H1 (cell line): ENCODE measurements at regions of chr2 and their contacts with region 1.

Region 1: DNA sequence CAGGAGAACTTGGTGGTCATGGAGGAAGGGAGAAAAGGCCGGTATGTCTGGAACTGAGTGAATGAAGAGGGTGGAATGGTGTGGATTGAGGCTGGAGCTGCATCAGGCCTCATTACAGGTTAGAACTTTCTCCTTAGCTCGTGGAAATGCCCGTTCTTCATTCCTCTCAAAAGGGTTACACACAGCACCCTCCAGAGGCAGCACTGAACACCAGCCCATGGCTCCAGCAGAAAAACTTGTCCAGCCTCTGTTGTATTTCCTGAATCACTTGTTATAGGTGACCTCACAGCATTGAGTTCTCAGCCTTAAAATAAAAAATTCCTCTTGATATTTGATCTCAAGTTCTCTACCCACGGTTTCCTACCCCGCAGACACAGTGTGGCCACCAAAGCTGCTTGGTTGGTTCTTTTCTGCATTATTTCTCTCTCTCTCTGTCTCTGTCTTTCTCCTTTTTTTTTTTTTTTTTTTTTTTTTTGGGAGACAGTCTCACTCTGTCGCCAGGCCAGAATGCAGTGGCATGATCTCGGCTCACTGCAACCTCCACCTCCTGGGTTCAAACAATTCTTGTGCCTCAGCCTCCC is 89.6 kb downstream of the ITGB1BP1 start:
- DNase-seq: peak in 1 of 2 experiments; percentile 21
- H3K4me3 ChIP-seq: no peak overlapping the region
- H3K27ac ChIP-seq: no peak overlapping the region
- H3K4me1 ChIP-seq: no peaks in the 10 kb centered on the region; a peak in 1 of 7 replicates
- H3K27me3 ChIP-seq: no peaks in the 10 kb centered on the region
- CTCF ChIP-seq: peak; percentile 65 to 74 (median 66)
- EP300 ChIP-seq: no peak
- POLR2A ChIP-seq: no peak
- RAD21 ChIP-seq: peak; percentile 79 to 83

Region 2: DNA sequence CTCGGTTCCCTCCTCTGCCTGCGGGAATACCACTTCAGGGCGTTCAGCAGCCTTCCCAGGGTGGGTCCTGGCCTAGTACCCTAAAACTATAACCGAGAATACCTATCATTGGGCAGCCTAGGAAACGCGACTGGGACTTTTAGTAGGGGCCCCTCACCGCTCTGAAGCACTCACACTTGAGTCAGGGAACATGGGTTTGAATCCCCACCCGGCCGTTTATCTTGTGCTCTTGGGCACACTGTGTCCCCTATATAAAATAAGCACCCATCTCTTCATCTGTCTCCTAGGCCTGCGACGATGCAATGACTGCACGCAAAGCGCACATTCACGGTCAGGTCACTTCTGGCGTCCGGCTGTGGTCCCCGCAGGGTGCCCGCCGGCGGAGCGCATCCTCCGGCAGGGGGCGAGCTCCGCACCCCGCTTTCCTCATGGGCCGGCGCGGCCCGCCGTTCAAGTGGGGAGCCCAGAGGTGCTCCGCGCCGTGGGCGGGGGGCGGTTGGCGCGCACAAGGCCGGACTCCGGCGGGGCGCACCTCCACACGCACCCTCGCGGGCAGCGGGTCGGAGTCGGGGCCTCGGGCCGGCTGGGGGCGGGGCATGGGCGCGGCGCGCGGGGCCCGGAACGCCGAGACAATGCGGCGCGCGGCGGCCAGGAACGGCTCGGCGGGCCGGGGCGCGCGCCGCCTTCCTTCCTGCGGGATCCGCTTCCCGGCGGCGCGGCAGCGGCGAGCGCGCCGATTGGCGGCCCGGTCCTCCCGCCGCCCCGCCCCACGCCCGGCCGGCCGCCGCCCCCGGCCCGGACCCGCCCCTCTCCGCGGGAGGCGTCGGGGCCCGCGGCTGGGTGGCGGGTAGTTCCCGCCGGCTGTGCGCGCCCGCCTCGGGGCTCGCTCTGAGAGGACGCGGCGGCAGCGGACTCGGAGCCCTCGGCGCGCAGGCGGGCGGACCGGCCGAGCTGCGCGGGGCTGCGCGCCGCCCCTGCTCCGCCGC is 127.4 kb before region 1 on chr2 and contains the start of gene ASAP2:
- CTCF ChIA-PET with region 1: interaction called, 13 read pairs
- POLR2A ChIA-PET with region 1: interaction called, 3 read pairs
- DNase-seq: peak in 1 of 2 experiments; percentile 80
- H3K4me3 ChIP-seq: peak within 1 kb of the TSS; percentile 67 to 95 (median 80)
- H3K27ac ChIP-seq: no peak within 1 kb of the TSS
- H3K4me1 ChIP-seq: peaks cover 0 to 6% (median 3%) of the 10 kb centered on the region in 4 experiments; a peak in 4 of 7 replicates
- H3K27me3 ChIP-seq: peaks cover 0 to 6% (median 3%) of the 10 kb centered on the region in 4 experiments; a peak in 3 of 7 replicates
- CTCF ChIP-seq: peak; percentile 56 to 72 (median 63)
- EP300 ChIP-seq: no peak
- POLR2A ChIP-seq: peak; percentile 56 to 59
- RAD21 ChIP-seq: peak; percentile 31 to 63; a peak in 2 of 4 replicates
- total RNA-seq, gene ASAP2: 16.6 and 18.7 TPM in 2 replicates

Region 3: GRCh38 chr2:9269695-9270360 is 63.9 kb before region 1 on chr2:
- CTCF ChIA-PET with region 1: no interaction called
- POLR2A ChIA-PET with region 1: no interaction called
- DNase-seq: no peak
- H3K4me3 ChIP-seq: no peak overlapping the region
- H3K27ac ChIP-seq: no peak overlapping the region
- H3K4me1 ChIP-seq: peaks cover 0 to 11% (median 1%) of the 10 kb centered on the region in 4 experiments; a peak in 4 of 7 replicates
- H3K27me3 ChIP-seq: no peaks in the 10 kb centered on the region
- CTCF ChIP-seq: no peak
- EP300 ChIP-seq: no peak
- POLR2A ChIP-seq: no peak
- RAD21 ChIP-seq: no peak

Region 4: DNA sequence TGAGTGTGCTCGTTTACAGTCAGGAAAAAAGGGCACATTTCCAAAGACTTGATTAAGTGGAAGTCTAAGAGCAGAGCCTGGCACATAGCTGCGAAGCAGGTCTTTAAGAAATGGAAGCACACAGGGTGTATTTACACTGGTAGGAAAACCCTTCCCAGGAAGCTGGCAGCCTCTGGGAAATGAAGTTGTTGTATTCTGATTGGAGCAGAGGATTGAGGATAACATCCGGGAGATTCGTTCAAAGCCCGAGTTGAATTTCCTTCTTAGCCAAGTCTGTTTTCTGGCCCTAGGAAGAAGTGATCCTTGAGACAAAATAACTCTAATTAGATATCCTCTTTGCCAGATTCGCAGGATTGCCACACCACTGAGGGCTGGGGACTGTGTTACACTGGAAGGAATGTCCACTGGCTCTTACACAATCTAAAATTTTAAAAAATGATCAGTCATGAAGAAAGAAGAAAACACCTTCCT is 13.8 kb after region 1 on chr2:
- CTCF ChIA-PET with region 1: interaction called, 22 read pairs
- POLR2A ChIA-PET with region 1: no interaction called
- DNase-seq: no peak
- H3K4me3 ChIP-seq: no peak overlapping the region
- H3K27ac ChIP-seq: no peak overlapping the region
- H3K4me1 ChIP-seq: peaks cover 0 to 7% (median 2%) of the 10 kb centered on the region in 4 experiments; a peak in 6 of 7 replicates
- H3K27me3 ChIP-seq: no peaks in the 10 kb centered on the region
- CTCF ChIP-seq: no peak
- EP300 ChIP-seq: no peak
- POLR2A ChIP-seq: no peak
- RAD21 ChIP-seq: no peak